GM12878 (cell line): ENCODE measurements at regions of chr19 and their contacts with region 1.

Region 1: GRCh38 chr19:4077882-4078614 is 11.3 kb upstream of the ZBTB7A start:
- DNase-seq: no peak
- ATAC-seq: peak; percentile 96
- H3K4me3 ChIP-seq: peak overlapping the region; percentile 74
- H3K27ac ChIP-seq: peak overlapping the region; percentile 72
- H3K4me1 ChIP-seq: peaks cover 14% of the 10 kb centered on the region
- H3K27me3 ChIP-seq: no peaks in the 10 kb centered on the region
- CTCF ChIP-seq: no peak
- EP300 ChIP-seq: peak in 1 of 2 experiments; percentile 10; a peak in 1 of 4 replicates
- POLR2A ChIP-seq: peak; percentile 47; the same call in 1 of the 2 replicates
- RAD21 ChIP-seq: no peak

Region 2: DNA sequence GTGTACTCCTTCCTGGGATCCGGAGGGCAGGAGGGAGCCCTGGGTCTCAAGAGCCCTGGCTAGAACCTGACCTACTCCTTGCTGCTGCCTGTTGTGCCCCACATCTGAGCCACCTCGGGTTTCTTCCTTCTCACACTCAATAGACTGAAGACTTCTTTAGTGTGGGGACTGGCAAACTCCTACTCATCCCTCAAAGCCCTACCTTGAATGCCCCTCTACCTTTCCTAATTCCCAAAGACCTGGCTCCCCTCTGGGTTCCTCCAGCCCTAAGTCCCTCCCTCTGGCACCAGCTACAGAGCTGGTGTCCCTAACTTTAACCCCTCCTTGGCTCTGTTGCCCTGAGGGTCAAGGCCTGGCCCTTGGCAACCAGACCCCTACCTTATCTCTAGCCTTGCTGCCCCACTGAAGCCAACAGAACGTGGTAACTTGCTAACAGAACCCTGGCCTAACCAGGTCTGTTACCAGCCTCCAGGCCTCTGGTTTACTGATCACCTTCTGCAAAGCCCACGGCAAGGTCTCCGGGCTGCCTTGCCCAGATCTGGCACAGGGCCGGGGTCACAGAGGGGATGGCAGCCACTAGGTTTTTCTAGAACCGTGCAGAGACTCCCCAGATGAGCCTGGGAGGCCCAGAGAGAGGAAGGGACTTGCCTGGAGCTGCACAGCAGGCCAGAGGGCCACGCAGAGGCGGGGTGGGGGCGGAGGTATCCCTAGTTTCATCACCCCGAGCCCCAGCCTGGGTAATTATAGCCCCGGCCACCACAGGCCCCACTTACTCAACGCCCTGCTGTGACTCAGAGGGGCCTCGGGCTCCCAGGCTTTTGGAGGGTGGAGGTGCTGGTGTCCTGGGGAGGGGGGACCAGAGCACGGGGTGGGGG is 26.6 kb before region 1 on chr19:
- CTCF ChIA-PET with region 1: no interaction called
- POLR2A ChIA-PET with region 1: no interaction called
- RAD21 ChIA-PET with region 1: no interaction called
- SMC1A ChIA-PET with region 1: no interaction called
- in situ Hi-C with region 1: no loop called
- intact Hi-C with region 1: no loop called
- DNase-seq: no peak
- ATAC-seq: peak; percentile 14; the same call in 2 of the 3 replicates
- H3K4me3 ChIP-seq: no peak overlapping the region
- H3K27ac ChIP-seq: no peak overlapping the region
- H3K4me1 ChIP-seq: 0 out of 2 replicates have a peak, but pooled peaks cover 2% of the 10 kb centered on the region
- H3K27me3 ChIP-seq: no peaks in the 10 kb centered on the region
- CTCF ChIP-seq: no peak
- EP300 ChIP-seq: no peak
- POLR2A ChIP-seq: no peak
- RAD21 ChIP-seq: no peak

Region 3: GRCh38 chr19:4115050-4115817 is 37.2 kb after region 1 on chr19:
- CTCF ChIA-PET with region 1: interaction called, 6 read pairs
- POLR2A ChIA-PET with region 1: interaction called, 6 read pairs
- RAD21 ChIA-PET with region 1: interaction called, 10 read pairs
- SMC1A ChIA-PET with region 1: interaction called, 3 read pairs
- in situ Hi-C with region 1: no loop called
- intact Hi-C with region 1: no loop called
- DNase-seq: peak; percentile 67
- ATAC-seq: peak; percentile 96
- H3K4me3 ChIP-seq: peak overlapping the region; percentile 50
- H3K27ac ChIP-seq: peak overlapping the region; percentile 55
- H3K4me1 ChIP-seq: peaks cover 28% of the 10 kb centered on the region
- H3K27me3 ChIP-seq: no peaks in the 10 kb centered on the region
- CTCF ChIP-seq: peak in 2 of 3 experiments; percentile 2 to 33; a peak in 3 of 6 replicates
- EP300 ChIP-seq: 0 out of 4 replicates have a peak, but pooled peaks of 1 of the 2 experiments have one; percentile 51
- POLR2A ChIP-seq: no peak; the same call in 1 of the 2 replicates
- RAD21 ChIP-seq: 0 out of 2 replicates have a peak, but pooled peaks have one; percentile 2